ENCODE measurements at regions of chr1 and their contacts with region 1.

Region 1: GRCh38 chr1:211323156-211324063 is 3.2 kb upstream of the TRAF5 start:
- DNase-seq: peak in 5 of 10 donors; percentile 32 to 70 (median 52)
- H3K4me3 ChIP-seq: no peak overlapping the region
- H3K27ac ChIP-seq: no peak overlapping the region
- H3K27me3 ChIP-seq: no peaks in the 10 kb centered on the region
- CTCF ChIP-seq: peak; percentile 28 to 77 (median 66)

Region 2: GRCh38 chr1:211382714-211383480 is 59.5 kb after region 1 on chr1:
- intact Hi-C with region 1: loop called in 1 of 2 experiments (anchors 10 kb)
- DNase-seq: peak; percentile 76 to 96 (median 92)
- H3K4me3 ChIP-seq: peak overlapping the region; percentile 62 to 93 (median 80)
- H3K27ac ChIP-seq: peak overlapping the region; percentile 46 to 96 (median 89)
- H3K27me3 ChIP-seq: no peaks in the 10 kb centered on the region
- CTCF ChIP-seq: peak in 22 of 56 donors; percentile 3 to 55 (median 24)

Region 3: DNA sequence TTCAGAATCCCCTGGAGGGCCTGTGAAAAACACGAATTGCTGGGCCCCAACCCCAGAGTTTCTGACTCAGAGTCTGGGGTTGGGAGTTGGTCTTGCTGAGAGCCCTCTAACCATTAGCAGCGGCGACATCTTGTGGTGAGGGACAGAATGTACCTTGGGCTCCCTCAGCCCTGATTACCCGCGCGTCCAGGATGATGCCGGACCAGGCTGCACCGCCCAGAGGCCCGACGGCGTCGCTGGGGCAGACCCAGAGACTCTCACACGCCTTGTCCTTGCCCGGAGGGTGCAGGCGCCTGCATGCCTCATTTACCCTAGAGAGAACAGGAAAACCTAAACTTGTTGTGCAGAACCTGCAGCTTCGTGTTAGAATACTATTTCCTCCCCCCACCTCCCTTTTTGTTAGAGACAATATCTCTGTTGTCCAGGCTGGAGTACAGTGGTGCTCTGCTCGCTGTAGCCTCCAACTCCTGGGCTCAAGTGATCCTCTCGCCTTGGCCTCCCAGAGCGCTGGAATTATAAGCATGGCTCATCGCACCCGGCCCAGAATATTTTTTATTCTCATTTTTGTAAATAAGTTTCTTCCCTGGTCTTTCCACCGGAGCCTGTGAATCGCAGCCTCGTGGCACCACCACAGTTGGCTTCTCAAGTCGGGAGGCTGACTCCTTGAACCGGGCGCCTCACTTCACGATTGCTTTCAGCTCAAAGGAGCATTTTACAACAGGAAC is 190.8 kb after region 1 on chr1:
- intact Hi-C with region 1: loop called in 1 of 2 experiments (anchors 5 kb)
- DNase-seq: peak; percentile 54 to 84 (median 76)
- H3K4me3 ChIP-seq: peak overlapping the region in 24 of 59 donors; percentile 18 to 51 (median 34)
- H3K27ac ChIP-seq: peak overlapping the region in 6 of 59 donors; percentile 3 to 63 (median 17)
- H3K27me3 ChIP-seq: no peaks in the 10 kb centered on the region
- CTCF ChIP-seq: peak; percentile 31 to 91 (median 76)